ENCODE measurements at regions of chr12 and their contacts with region 1.

Region 1: GRCh38 chr12:94621664-94622359 is 28.5 kb downstream of the TMCC3 start:
- DNase-seq: peak; percentile 87
- ATAC-seq: peak; percentile 98
- H3K4me3 ChIP-seq: peak overlapping the region; percentile 47; the same call in 1 of the 2 replicates
- H3K27ac ChIP-seq: peak overlapping the region; percentile 85
- H3K4me1 ChIP-seq: peaks cover 16% of the 10 kb centered on the region
- H3K27me3 ChIP-seq: no peaks in the 10 kb centered on the region
- CTCF ChIP-seq: no peak
- EP300 ChIP-seq: peak; percentile 68 to 79; a peak in 2 of 4 replicates
- POLR2A ChIP-seq: no peak
- RAD21 ChIP-seq: no peak

Region 2: DNA sequence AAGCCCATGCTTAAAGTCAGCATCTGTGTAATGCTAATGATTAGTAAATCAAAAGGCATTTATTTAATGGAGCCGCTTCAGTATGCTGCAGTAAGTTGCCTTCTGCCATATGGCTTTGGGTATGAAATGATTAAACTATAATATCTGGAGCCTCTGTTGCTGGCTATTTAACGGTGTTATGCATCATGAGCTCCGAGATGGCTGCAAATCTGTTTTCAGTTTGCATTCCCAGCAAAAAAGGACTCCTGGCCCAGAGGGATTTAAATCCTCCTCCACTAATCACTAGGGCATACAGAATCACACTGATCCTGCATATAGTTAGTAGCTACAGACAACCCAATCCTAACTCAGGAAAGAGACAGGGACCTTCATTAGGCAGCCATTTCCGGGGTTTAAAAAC is 1521.2 kb before region 1 on chr12:
- CTCF ChIA-PET with region 1: no interaction called
- POLR2A ChIA-PET with region 1: no interaction called
- RAD21 ChIA-PET with region 1: no interaction called
- SMC1A ChIA-PET with region 1: no interaction called
- in situ Hi-C with region 1: no loop called
- intact Hi-C with region 1: no loop called
- DNase-seq: no peak
- ATAC-seq: no peak
- H3K4me3 ChIP-seq: no peak overlapping the region
- H3K27ac ChIP-seq: no peak overlapping the region
- H3K4me1 ChIP-seq: peaks cover 11% of the 10 kb centered on the region
- H3K27me3 ChIP-seq: no peaks in the 10 kb centered on the region
- CTCF ChIP-seq: no peak
- EP300 ChIP-seq: no peak
- POLR2A ChIP-seq: no peak
- RAD21 ChIP-seq: no peak

Region 3: DNA sequence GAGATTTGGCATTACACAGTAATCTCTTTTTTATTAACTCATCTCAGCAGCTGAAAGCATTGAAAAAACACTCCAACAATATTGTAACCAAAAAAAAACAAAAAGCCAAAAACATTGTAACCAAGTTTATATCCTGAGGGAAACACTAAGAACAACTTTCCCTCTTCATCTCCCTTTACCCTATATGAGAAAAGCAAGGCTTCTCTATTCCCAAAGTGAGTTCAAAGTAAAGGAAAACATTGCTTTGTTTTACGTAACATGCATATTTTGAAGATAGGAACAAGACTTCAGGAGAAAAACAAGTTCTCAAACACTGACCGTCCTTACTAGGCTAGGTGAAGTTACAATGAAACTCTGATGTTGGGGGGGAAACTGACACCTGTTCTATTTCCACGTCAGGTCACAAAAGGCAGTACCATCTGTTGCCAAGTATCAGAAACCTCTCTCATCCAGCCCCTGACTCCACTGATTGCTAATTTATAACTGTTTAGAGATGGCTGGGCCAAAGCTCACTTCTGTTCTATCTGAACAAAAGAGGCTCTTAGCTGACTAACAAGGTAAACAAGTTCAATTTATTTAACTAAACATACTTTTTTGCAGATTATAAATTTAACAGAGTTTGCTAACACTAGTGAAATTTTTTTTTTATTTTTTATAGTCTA is 541.3 kb before region 1 on chr12:
- CTCF ChIA-PET with region 1: no interaction called
- POLR2A ChIA-PET with region 1: no interaction called
- RAD21 ChIA-PET with region 1: no interaction called
- SMC1A ChIA-PET with region 1: no interaction called
- in situ Hi-C with region 1: no loop called
- intact Hi-C with region 1: no loop called
- DNase-seq: no peak
- ATAC-seq: no peak
- H3K4me3 ChIP-seq: no peak overlapping the region
- H3K27ac ChIP-seq: no peak overlapping the region
- H3K4me1 ChIP-seq: no peaks in the 10 kb centered on the region
- H3K27me3 ChIP-seq: no peaks in the 10 kb centered on the region
- CTCF ChIP-seq: no peak
- EP300 ChIP-seq: no peak
- POLR2A ChIP-seq: no peak
- RAD21 ChIP-seq: no peak

Region 4: GRCh38 chr12:94504386-94504785 is 117.4 kb before region 1 on chr12:
- CTCF ChIA-PET with region 1: no interaction called
- POLR2A ChIA-PET with region 1: no interaction called
- RAD21 ChIA-PET with region 1: no interaction called
- SMC1A ChIA-PET with region 1: no interaction called
- in situ Hi-C with region 1: no loop called
- intact Hi-C with region 1: no loop called
- DNase-seq: no peak
- ATAC-seq: no peak
- H3K4me3 ChIP-seq: no peak overlapping the region
- H3K27ac ChIP-seq: no peak overlapping the region
- H3K4me1 ChIP-seq: peaks cover 6% of the 10 kb centered on the region; the same call in 1 of the 2 replicates
- H3K27me3 ChIP-seq: no peaks in the 10 kb centered on the region
- CTCF ChIP-seq: no peak
- EP300 ChIP-seq: no peak
- POLR2A ChIP-seq: no peak
- RAD21 ChIP-seq: no peak

Region 5: DNA sequence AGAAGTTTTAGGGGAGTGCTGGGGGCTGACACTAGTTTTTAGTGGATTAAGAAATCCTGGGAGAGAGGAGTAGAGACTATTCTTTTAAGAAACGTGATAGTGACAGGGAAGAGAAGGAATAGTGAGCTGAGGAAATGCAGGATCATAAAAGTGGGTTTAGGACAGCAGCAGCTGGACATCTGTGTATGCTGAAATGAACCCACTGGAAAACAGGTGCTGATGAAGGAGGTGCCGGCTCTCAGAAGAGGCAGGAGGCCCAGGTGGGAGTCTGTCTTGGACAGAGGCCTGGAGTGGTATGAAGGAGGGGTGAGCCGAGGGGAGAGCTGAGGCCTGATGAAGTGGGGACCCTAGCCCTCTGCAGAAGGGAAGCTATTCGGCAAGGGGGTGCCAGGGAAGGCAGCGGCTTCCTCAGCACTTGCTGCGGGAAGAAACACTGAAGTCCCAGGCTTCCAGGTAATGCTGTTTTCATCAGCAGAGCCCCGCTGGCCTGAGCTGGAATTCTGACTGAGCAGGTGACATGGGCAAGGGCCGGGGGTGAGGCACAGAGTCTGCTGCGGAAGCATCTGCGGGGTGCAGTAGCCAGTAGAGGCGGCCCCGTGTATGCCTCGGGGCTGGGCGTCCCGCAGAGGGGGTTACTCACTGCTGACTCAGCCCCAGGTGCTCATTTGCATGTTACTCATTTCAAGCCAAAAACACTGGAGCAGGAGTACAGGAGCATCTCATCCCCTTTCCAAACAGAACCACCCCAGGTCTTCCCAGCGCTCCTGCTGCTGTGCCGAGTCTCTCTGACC is 61.2 kb before region 1 on chr12:
- CTCF ChIA-PET with region 1: interaction called, 4 read pairs
- POLR2A ChIA-PET with region 1: interaction called, 3 read pairs
- RAD21 ChIA-PET with region 1: interaction called, 18 read pairs
- SMC1A ChIA-PET with region 1: interaction called, 13 read pairs
- in situ Hi-C with region 1: no loop called
- intact Hi-C with region 1: loop called (anchors 2 kb)
- DNase-seq: peak; percentile 36
- ATAC-seq: peak; percentile 83
- H3K4me3 ChIP-seq: no peak overlapping the region
- H3K27ac ChIP-seq: peak overlapping the region; percentile 15; the same call in 1 of the 2 replicates
- H3K4me1 ChIP-seq: peaks cover 27% of the 10 kb centered on the region
- H3K27me3 ChIP-seq: no peaks in the 10 kb centered on the region
- CTCF ChIP-seq: no peak
- EP300 ChIP-seq: no peak; a peak in 1 of 4 replicates
- POLR2A ChIP-seq: peak; percentile 61
- RAD21 ChIP-seq: no peak

Region 6: GRCh38 chr12:94636462-94637085 is 14.8 kb after region 1 on chr12:
- CTCF ChIA-PET with region 1: interaction called, 40 read pairs
- POLR2A ChIA-PET with region 1: interaction called, 13 read pairs
- RAD21 ChIA-PET with region 1: interaction called, 68 read pairs
- SMC1A ChIA-PET with region 1: interaction called, 58 read pairs
- in situ Hi-C with region 1: no loop called
- intact Hi-C with region 1: loop called (anchors 2 kb)
- DNase-seq: no peak
- ATAC-seq: no peak
- H3K4me3 ChIP-seq: no peak overlapping the region
- H3K27ac ChIP-seq: no peak overlapping the region
- H3K4me1 ChIP-seq: peaks cover 18% of the 10 kb centered on the region
- H3K27me3 ChIP-seq: no peaks in the 10 kb centered on the region
- CTCF ChIP-seq: no peak
- EP300 ChIP-seq: no peak
- POLR2A ChIP-seq: no peak
- RAD21 ChIP-seq: no peak

Region 7: GRCh38 chr12:94676031-94676641 is 54.3 kb after region 1 on chr12:
- CTCF ChIA-PET with region 1: no interaction called
- POLR2A ChIA-PET with region 1: interaction called, 5 read pairs
- RAD21 ChIA-PET with region 1: interaction called, 3 read pairs
- SMC1A ChIA-PET with region 1: interaction called, 11 read pairs
- in situ Hi-C with region 1: no loop called
- intact Hi-C with region 1: loop called (anchors 2 kb)
- DNase-seq: peak; percentile 65
- ATAC-seq: peak; percentile 84
- H3K4me3 ChIP-seq: no peak overlapping the region; the same call in 1 of the 2 replicates
- H3K27ac ChIP-seq: peak overlapping the region; percentile 76
- H3K4me1 ChIP-seq: peaks cover 27% of the 10 kb centered on the region
- H3K27me3 ChIP-seq: no peaks in the 10 kb centered on the region
- CTCF ChIP-seq: no peak
- EP300 ChIP-seq: peak; percentile 42 to 56; a peak in 2 of 4 replicates
- POLR2A ChIP-seq: no peak
- RAD21 ChIP-seq: no peak

Region 8: GRCh38 chr12:94721173-94721572 is 99.4 kb after region 1 on chr12:
- CTCF ChIA-PET with region 1: interaction called, 5 read pairs
- POLR2A ChIA-PET with region 1: interaction called, 3 read pairs
- RAD21 ChIA-PET with region 1: interaction called, 10 read pairs
- SMC1A ChIA-PET with region 1: interaction called, 27 read pairs
- in situ Hi-C with region 1: no loop called
- intact Hi-C with region 1: loop called (anchors 5 kb)
- DNase-seq: peak; percentile 75
- ATAC-seq: peak; percentile 92
- H3K4me3 ChIP-seq: 0 out of 2 replicates have a peak overlapping the region, but pooled peaks have one; percentile 8
- H3K27ac ChIP-seq: peak overlapping the region; percentile 63
- H3K4me1 ChIP-seq: peaks cover 24% of the 10 kb centered on the region
- H3K27me3 ChIP-seq: no peaks in the 10 kb centered on the region
- CTCF ChIP-seq: no peak
- EP300 ChIP-seq: 0 out of 4 replicates have a peak, but pooled peaks of 1 of the 2 experiments have one; percentile 34
- POLR2A ChIP-seq: no peak
- RAD21 ChIP-seq: no peak

Region 9: GRCh38 chr12:94769047-94769420 is 147.2 kb after region 1 on chr12:
- CTCF ChIA-PET with region 1: interaction called, 9 read pairs
- POLR2A ChIA-PET with region 1: interaction called, 8 read pairs
- RAD21 ChIA-PET with region 1: interaction called, 5 read pairs
- SMC1A ChIA-PET with region 1: interaction called, 21 read pairs
- in situ Hi-C with region 1: no loop called
- intact Hi-C with region 1: no loop called
- DNase-seq: peak; percentile 53
- ATAC-seq: peak; percentile 91
- H3K4me3 ChIP-seq: peak overlapping the region; percentile 55; the same call in 1 of the 2 replicates
- H3K27ac ChIP-seq: peak overlapping the region; percentile 78
- H3K4me1 ChIP-seq: peaks cover 37% of the 10 kb centered on the region
- H3K27me3 ChIP-seq: no peaks in the 10 kb centered on the region
- CTCF ChIP-seq: no peak
- EP300 ChIP-seq: no peak
- POLR2A ChIP-seq: peak; percentile 26; the same call in 1 of the 2 replicates
- RAD21 ChIP-seq: no peak

Region 10: DNA sequence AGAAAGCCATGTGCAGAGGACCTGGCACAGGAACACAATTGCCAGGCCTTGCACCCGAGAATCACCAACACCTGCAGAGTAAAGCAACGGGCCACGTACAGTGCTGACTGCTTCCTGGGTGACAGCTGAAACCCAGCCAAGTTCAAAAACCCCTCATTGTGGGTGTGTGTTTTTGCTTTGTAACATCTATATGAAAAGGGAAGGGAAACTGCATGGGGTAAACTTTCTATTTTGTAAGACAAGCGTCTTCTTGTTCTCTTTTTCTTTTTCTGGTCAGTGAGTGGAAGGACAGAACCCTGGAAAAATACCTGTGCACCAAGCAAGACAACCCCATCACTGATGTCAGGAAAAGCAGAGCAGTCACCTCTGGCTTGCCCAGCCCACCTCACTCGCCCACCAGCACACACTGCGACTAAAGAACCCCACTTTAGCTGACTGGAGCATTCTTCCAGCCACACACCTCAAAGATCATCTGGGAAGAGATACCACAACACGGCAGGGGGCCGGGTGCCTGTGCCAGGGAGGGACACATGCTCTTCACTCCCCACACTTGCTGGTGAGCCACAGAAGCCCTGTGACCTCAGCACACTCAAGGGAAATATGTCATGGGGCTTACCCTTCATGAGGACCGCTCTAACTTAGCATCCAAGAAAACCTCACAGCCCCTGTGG is 209.4 kb after region 1 on chr12:
- CTCF ChIA-PET with region 1: no interaction called
- POLR2A ChIA-PET with region 1: no interaction called
- RAD21 ChIA-PET with region 1: no interaction called
- SMC1A ChIA-PET with region 1: interaction called, 4 read pairs
- in situ Hi-C with region 1: no loop called
- intact Hi-C with region 1: loop called (anchors 5 kb)
- DNase-seq: peak; percentile 98
- ATAC-seq: peak; percentile 89
- H3K4me3 ChIP-seq: peak overlapping the region; percentile 52
- H3K27ac ChIP-seq: peak overlapping the region; percentile 94
- H3K4me1 ChIP-seq: peaks cover 46% of the 10 kb centered on the region
- H3K27me3 ChIP-seq: no peaks in the 10 kb centered on the region
- CTCF ChIP-seq: no peak
- EP300 ChIP-seq: peak; percentile 92 to 94
- POLR2A ChIP-seq: peak; percentile 68
- RAD21 ChIP-seq: peak; percentile 25; the same call in 1 of the 2 replicates

Measured in GM12878 (cell line).